H1 (cell line): ENCODE measurements at regions of chr22 and their contacts with region 1.

Region 1: DNA sequence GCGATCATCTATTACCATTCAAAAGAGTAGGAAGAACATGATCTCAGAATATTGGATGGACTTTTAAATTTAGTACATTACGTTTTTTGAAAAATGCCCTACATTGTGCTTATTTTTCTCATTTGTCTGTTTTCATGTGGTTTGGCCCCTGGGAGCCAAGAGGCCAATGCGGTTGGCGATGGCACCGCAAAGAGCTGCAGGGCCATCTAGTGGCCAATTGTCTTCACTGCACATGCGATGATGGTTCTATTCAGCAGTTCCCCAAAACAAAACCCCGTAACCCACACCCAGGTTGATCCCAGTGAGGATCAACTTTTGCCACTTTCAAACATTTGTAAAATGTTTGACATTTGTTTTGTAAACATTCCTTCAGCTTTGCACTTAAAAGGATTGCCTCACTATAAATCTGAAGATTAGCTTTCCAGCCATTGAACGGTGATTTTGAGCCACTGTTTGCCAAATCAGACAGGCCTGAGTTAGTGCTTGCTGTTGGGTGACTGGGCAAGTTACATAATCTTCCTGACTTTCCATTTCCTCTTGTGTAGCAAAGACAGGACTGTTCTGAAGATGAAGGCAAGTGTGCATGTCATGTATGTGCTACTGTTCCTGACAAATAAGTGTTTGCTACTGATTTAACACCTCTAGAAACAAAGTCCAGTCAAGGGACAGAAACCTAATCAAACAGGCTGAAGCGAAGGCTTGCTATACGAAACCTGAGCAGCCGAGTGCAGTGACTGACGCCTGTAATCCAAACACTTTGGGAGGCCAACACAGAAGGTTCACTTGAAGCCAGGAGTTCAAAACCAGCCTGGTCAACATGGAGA is 29.2 kb upstream of the XBP1 start:
- DNase-seq: peak; percentile 25 to 87
- H3K4me3 ChIP-seq: no peak overlapping the region
- H3K27ac ChIP-seq: no peak overlapping the region
- H3K4me1 ChIP-seq: no peaks in the 10 kb centered on the region; a peak in 1 of 7 replicates
- H3K27me3 ChIP-seq: no peaks in the 10 kb centered on the region
- CTCF ChIP-seq: peak; percentile 89 to 97 (median 93)
- EP300 ChIP-seq: no peak
- POLR2A ChIP-seq: no peak
- RAD21 ChIP-seq: peak; percentile 98 to 99

Region 2: GRCh38 chr22:28600546-28601143 is 228.9 kb before region 1 on chr22:
- CTCF ChIA-PET with region 1: interaction called, 64 read pairs
- POLR2A ChIA-PET with region 1: interaction called, 3 read pairs
- DNase-seq: no peak
- H3K4me3 ChIP-seq: no peak overlapping the region
- H3K27ac ChIP-seq: no peak overlapping the region
- H3K4me1 ChIP-seq: no peaks in the 10 kb centered on the region; a peak in 1 of 7 replicates
- H3K27me3 ChIP-seq: no peaks in the 10 kb centered on the region
- CTCF ChIP-seq: peak in 2 of 3 experiments; percentile 34 to 40; a peak in 2 of 4 replicates
- EP300 ChIP-seq: no peak
- POLR2A ChIP-seq: no peak
- RAD21 ChIP-seq: peak; percentile 79

Region 3: DNA sequence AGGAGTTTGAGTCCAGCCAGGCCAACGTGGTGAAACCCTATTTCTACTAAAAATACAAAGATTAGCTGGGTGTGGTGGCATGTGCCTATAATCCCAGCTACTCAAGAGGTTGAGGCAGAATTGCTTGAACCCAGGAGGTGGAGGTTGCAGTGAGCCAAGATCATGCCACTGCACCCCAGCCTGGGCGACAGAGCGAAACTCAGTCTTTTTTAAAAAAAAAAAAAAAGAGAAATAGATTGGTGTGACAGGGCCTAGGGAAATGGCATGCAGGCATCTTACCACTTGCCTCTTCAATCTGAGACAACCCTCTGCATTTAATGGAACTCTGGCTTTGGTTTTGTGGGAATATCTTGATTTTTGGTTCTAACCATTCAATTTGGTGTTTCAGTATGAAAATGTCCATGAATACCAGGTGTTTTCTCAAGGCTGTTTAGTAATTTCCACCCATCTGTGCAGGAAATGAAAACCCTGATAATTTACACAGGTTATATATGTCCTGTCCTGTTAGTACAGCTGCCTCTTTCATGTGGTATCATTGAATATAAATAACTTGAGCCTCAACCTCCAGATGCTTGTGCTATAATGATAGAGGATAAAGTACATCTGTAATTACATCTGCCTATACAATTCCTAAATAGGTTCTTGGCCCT is 37.6 kb before region 1 on chr22:
- CTCF ChIA-PET with region 1: interaction called, 11 read pairs
- POLR2A ChIA-PET with region 1: interaction called, 4 read pairs
- DNase-seq: no peak
- H3K4me3 ChIP-seq: no peak overlapping the region
- H3K27ac ChIP-seq: no peak overlapping the region
- H3K4me1 ChIP-seq: no peaks in the 10 kb centered on the region
- H3K27me3 ChIP-seq: no peaks in the 10 kb centered on the region
- CTCF ChIP-seq: no peak
- EP300 ChIP-seq: no peak
- POLR2A ChIP-seq: no peak
- RAD21 ChIP-seq: no peak

Region 4: DNA sequence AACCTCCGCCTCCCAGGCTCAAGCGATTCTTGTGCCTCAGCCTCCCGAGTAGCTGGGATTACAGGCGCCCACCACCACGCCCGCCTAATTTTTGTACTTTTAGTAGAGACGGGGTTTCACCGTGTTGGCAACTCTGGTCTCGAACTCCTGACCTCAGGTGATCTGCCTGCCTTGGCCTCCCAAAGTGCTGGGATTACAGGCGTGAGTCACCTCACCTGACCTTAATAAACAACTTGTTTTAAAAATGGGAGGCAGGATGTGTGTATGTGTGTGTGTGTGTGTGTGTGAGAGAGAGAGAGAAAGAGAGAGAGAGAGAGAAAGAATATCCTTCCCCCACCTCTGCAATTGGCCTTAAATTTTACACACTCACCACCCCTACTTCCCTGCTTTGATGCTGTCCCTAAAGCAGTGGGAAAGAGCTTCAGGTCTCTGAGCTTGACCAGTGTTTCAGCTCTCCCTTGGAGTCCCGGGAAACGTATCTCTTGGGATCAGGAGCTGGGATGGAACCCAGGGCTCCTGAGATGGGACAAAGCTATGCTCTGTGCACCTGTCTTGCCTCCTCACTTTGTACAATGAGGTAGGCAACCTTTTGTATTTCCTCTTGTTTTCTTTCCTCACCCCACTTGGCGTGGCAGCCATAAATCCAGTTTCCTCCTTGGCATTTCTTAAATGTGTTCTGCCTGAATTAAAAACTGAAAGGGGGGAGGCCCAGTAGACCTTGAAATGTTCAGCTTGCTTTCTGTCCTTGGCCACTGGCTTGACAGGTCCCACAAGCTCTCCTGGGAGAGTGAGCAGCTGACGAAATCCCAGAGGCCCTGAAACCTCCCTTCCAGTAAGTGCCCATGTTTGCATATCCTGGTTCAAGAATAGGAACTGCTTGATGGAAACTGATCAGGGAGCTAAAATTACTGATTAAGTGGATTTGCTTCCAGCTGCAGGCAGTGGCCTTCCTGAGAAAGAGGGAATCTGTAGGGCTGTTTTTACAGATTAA is 11.4 kb before region 1 on chr22:
- CTCF ChIA-PET with region 1: interaction called, 26 read pairs
- POLR2A ChIA-PET with region 1: interaction called, 6 read pairs
- DNase-seq: no peak
- H3K4me3 ChIP-seq: no peak overlapping the region
- H3K27ac ChIP-seq: no peak overlapping the region
- H3K4me1 ChIP-seq: no peaks in the 10 kb centered on the region; a peak in 1 of 7 replicates
- H3K27me3 ChIP-seq: no peaks in the 10 kb centered on the region
- CTCF ChIP-seq: no peak
- EP300 ChIP-seq: no peak
- POLR2A ChIP-seq: no peak
- RAD21 ChIP-seq: no peak

Region 5: DNA sequence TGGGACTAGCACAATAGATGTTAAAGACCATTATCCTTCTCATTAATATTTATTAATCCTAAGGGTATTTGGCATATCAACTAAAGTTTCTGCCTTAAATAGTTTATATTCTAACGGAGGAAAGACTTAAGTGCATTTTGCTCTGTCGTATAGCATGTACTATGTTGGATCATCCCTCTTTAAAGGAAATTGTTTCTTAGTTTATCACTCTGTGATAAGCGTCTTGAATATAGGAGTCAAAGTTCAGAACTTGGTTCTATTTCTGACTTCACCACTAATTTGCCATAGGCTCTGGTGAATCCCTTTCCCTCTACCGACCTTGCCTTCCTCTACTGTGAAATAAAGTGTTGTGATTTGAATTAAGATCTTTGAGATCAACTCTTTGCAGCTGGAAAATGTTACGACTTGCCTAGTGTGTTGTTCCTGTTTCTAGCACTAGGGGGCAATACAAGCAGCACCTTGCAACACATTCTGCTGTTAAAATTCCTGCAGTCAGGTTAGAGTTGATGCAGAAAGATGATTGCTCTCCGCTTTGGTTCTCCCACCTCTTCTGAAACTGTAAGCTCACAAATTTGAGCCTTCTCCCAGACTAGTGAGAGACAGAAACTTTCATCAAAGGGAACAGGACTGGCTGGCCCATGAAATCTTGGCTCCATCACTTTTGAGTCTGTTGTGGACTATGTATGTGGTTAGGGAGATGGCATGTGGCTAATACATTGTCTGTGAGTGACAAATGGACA is 26.0 kb after region 1 on chr22:
- CTCF ChIA-PET with region 1: no interaction called
- POLR2A ChIA-PET with region 1: no interaction called
- DNase-seq: peak in 1 of 2 experiments; percentile 66
- H3K4me3 ChIP-seq: no peak overlapping the region
- H3K27ac ChIP-seq: no peak overlapping the region
- H3K4me1 ChIP-seq: peaks cover 0 to 4% (median 0%) of the 10 kb centered on the region in 4 experiments; a peak in 1 of 7 replicates
- H3K27me3 ChIP-seq: no peaks in the 10 kb centered on the region
- CTCF ChIP-seq: peak in 2 of 3 experiments; percentile 86 to 94; a peak in 3 of 4 replicates
- EP300 ChIP-seq: no peak
- POLR2A ChIP-seq: no peak
- RAD21 ChIP-seq: peak; percentile 95